ENCODE measurements at regions of chr13 and their contacts with region 1.

Region 1: GRCh38 chr13:24727731-24728601 is 36.0 kb upstream of the RNF17 start:
- DNase-seq: peak; percentile 76
- ATAC-seq: peak; percentile 100
- H3K4me3 ChIP-seq: no peak overlapping the region
- H3K27ac ChIP-seq: no peak overlapping the region
- H3K4me1 ChIP-seq: no peaks in the 10 kb centered on the region
- H3K27me3 ChIP-seq: peaks cover 1 to 7% of the 10 kb centered on the region in 2 experiments; a peak in 2 of 5 replicates
- CTCF ChIP-seq: peak; percentile 76
- EP300 ChIP-seq: no peak
- POLR2A ChIP-seq: no peak
- RAD21 ChIP-seq: no peak

Region 2: DNA sequence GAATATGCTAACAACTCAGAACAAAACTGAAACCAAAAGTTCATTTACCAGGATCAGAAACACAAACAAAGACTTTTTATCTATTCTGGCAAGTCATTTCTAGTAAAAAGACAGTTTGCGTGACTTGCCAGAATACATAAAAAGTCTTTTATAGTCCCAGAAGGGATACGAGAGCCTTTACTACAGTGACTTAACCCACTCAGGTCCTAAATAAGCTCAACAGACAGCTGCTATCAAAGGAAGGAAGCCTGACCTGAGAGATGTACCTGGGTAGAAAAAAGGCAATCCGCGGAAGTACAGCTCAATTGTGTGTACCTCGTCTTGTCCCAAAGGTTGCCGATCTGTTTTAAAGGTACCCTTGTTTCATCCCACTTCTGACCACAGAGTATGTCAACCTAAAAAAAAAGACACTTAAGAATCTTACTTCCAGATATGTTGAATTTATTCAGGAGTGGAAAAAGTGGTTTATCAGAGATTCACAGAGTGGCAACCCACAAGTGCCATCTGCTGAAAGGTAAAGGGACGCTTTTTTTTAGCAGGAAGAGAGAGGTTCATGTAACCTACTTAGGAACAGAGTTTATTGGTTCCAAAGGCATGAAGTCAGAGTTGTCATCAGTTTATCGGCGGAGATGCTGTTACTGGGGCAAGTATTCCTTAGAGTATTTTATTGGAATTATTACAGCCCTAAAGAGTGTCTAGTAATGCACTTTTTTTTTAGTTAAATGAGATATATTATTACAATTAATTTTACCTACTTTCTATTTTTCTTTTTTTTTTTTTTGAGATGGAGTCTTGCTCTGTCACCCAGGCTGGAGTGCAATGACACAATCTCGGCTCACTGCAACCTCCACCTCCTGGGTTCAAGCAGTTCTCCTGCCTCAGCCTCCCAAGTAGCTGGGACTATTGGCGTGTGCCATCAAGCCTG is 761.0 kb before region 1 on chr13:
- CTCF ChIA-PET with region 1: no interaction called
- POLR2A ChIA-PET with region 1: no interaction called
- in situ Hi-C with region 1: no loop called
- intact Hi-C with region 1: no loop called
- DNase-seq: no peak
- ATAC-seq: no peak
- H3K4me3 ChIP-seq: no peak overlapping the region
- H3K27ac ChIP-seq: no peak overlapping the region
- H3K4me1 ChIP-seq: no peaks in the 10 kb centered on the region
- H3K27me3 ChIP-seq: peaks cover 0 to 3% of the 10 kb centered on the region in 2 experiments; a peak in 1 of 5 replicates
- CTCF ChIP-seq: no peak
- EP300 ChIP-seq: no peak
- POLR2A ChIP-seq: no peak
- RAD21 ChIP-seq: no peak

Region 3: DNA sequence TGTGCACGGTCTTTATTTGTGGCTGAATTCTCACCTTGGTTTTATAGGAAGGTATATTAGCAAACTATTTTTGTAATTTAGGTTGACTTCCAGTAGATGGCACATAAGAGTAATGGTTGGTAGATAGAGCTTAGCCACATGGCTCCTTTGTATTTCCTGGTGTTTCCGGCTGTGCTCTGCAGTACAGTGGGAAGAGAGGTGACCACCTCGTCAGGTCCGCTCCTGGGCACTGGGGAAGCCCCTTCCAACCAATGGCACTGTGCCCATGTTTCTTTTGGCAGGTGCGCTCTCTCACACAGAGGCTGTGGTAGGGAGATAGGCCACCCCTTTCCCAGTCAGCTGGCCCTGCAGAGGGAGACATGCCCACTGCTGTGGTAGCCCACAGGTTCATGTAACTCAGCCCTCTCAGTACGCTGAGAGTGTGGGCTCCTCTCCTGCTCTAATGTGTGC is 122.0 kb before region 1 on chr13:
- CTCF ChIA-PET with region 1: interaction called, 8 read pairs
- POLR2A ChIA-PET with region 1: no interaction called
- in situ Hi-C with region 1: no loop called
- intact Hi-C with region 1: loop called (anchors 10 kb)
- DNase-seq: peak; percentile 47
- ATAC-seq: peak; percentile 94
- H3K4me3 ChIP-seq: no peak overlapping the region
- H3K27ac ChIP-seq: no peak overlapping the region
- H3K4me1 ChIP-seq: no peaks in the 10 kb centered on the region
- H3K27me3 ChIP-seq: peaks cover 0 to 3% of the 10 kb centered on the region in 2 experiments; a peak in 1 of 5 replicates
- CTCF ChIP-seq: peak; percentile 59
- EP300 ChIP-seq: no peak
- POLR2A ChIP-seq: no peak
- RAD21 ChIP-seq: no peak

Region 4: DNA sequence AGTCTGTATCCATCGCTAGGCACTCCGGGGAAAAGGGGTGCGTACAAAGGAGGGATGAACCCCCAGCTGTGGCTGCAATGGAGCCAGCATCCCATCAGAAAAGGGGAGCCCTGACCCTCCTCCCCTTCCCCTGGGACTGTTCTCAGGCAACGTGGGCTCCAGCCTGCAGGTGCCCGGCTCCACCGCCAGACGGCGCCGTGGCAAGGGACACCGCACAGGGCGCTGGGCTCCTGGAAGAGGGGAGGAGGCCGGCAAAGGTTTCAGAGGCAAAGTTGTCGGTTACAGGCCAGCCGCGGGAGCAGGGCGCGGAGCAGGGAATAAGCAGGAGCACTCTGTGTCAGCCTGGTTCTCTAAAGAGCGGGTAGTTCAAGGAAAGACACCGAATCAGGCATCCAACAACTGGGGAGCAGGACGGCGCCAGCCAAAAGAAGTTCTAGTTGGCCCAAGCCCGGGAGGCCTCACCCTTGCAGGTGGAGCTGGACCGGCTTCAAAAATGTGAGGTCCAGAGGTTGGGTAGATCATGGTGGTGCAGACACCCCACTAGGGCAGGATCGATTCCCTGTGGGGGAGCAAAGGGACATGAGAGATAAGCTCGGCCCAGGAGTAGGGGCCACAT is 100.8 kb before region 1 on chr13:
- CTCF ChIA-PET with region 1: interaction called, 7 read pairs
- POLR2A ChIA-PET with region 1: no interaction called
- in situ Hi-C with region 1: no loop called
- intact Hi-C with region 1: loop called (anchors 5 kb)
- DNase-seq: peak; percentile 18
- ATAC-seq: peak; percentile 92
- H3K4me3 ChIP-seq: no peak overlapping the region
- H3K27ac ChIP-seq: no peak overlapping the region
- H3K4me1 ChIP-seq: 0 out of 2 replicates have a peak, but pooled peaks cover 20% of the 10 kb centered on the region
- H3K27me3 ChIP-seq: peaks cover 0 to 3% of the 10 kb centered on the region in 2 experiments; a peak in 2 of 5 replicates
- CTCF ChIP-seq: peak; percentile 72
- EP300 ChIP-seq: no peak
- POLR2A ChIP-seq: no peak
- RAD21 ChIP-seq: no peak

Region 5: DNA sequence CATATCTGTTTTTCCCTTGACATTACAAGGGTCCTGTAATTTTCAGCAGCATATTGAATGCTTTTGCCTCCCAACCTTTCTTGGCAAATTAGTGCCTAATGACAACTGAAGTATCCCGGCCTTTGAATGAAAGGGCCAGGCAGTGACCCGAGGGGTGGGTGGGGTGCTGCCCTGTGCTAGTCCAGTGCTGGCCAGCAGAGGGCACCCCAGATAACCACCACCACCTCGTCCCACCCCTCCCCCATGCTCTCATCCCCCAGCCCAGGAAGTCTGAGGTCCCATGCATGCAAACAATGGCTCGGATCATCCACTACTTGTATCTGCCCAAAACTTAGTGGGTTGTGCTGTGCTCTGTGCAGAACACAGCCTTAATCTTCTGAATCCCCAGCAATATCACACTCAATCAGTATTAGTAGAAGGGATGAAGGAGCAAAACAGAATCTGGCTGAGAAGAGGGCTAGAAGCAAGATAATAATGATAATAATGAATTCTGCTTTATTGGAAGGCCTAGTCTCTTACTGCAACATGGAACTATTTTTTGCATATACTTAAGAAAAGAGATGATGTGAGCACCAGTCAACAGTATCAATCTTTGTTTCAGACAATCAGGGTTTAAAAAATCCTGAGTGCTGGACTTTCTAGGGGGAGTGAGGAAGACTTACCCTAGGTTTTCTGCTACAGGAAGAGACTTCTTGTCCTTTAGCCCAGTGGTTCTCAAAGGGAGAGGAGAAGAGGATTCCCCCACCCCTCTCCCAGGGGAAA is 43.9 kb before region 1 on chr13:
- CTCF ChIA-PET with region 1: interaction called, 10 read pairs
- POLR2A ChIA-PET with region 1: no interaction called
- in situ Hi-C with region 1: no loop called
- intact Hi-C with region 1: loop called (anchors 5 kb)
- DNase-seq: peak; percentile 43
- ATAC-seq: peak; percentile 91
- H3K4me3 ChIP-seq: no peak overlapping the region
- H3K27ac ChIP-seq: no peak overlapping the region
- H3K4me1 ChIP-seq: peaks cover 18% of the 10 kb centered on the region
- H3K27me3 ChIP-seq: peaks cover 4 to 44% of the 10 kb centered on the region in 2 experiments; a peak in 4 of 5 replicates
- CTCF ChIP-seq: peak; percentile 77
- EP300 ChIP-seq: no peak
- POLR2A ChIP-seq: no peak
- RAD21 ChIP-seq: peak; percentile 28; the same call in 1 of the 2 replicates

Region 6: DNA sequence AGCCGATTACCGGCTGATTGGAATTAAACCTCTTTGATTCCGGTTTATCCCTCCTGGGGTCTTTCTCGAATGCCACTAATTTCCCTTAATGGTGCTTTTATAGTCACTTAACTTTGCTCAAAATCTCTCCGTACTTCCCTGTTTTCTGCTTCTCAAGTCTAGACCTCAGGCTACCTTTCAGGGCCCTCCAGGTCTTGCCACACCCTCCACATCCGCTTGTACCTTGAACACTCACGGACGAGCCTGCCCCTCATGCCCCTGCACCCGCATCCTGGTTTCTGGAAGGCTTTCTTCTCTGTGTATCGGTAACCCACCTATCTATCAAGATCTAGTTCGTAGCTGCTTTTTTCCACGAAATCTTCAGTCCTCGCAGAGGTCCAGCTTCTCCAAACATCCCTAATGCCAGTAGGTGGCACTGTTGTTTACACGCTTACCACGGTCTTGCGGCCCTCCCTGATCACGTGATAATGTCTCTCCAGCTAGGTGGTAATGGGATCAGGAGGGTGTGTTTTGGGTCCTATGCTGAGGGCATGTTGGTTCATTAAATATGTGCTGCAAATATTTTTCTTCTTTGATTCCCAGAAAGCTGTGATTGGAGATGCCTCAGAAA is 34.0 kb before region 1 on chr13:
- CTCF ChIA-PET with region 1: interaction called, 9 read pairs
- POLR2A ChIA-PET with region 1: no interaction called
- in situ Hi-C with region 1: no loop called
- intact Hi-C with region 1: loop called (anchors 1 kb)
- DNase-seq: peak; percentile 60
- ATAC-seq: peak; percentile 90
- H3K4me3 ChIP-seq: no peak overlapping the region
- H3K27ac ChIP-seq: no peak overlapping the region
- H3K4me1 ChIP-seq: no peaks in the 10 kb centered on the region
- H3K27me3 ChIP-seq: peaks cover 5 to 40% of the 10 kb centered on the region in 2 experiments; a peak in 4 of 5 replicates
- CTCF ChIP-seq: peak; percentile 73
- EP300 ChIP-seq: no peak
- POLR2A ChIP-seq: no peak
- RAD21 ChIP-seq: no peak